ENCODE measurements at regions of chr10 and their contacts with region 1.

Region 1: GRCh38 chr10:91090761-91091529 is 129.5 kb upstream of the PCGF5 start:
- DNase-seq: no peak
- ATAC-seq: peak; percentile 35

Region 2: DNA sequence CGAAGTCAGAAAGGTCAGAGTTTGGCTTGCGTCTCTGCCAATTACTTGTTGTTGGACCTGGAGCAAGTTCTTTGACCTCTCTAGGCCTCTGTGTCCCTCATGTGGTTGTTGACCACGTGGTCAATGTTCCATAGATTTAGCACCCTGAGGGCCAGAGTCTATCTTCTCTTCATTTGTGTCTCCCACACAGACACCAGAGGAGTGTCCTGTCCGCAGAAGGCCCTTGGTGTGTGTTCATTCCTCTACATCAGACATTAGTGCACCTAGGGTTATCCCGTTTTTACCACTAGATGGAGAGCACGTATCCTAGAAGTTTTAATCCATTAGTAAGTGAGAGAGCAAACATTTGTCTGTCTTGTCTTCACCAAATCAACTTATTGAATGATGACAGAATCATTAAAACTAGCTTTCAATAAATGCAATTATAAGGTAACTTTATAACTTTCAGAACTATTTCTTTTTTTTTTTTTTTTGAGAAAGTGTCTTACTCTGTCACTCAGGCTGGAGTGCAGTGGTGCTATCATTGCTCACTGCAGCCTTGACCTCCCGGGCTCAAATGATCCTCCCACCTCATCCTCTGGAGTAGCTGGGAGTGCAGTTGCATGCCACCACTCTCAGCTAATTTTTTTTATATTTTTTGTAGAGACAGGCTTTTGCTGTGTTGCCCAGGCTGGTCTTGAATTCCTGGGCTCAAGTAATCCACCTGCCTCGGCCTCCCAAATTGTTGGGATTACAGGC is 47.6 kb before region 1 on chr10:
- intact Hi-C with region 1: loop called (anchors 5 kb)
- DNase-seq: no peak
- ATAC-seq: peak; percentile 88

Region 3: DNA sequence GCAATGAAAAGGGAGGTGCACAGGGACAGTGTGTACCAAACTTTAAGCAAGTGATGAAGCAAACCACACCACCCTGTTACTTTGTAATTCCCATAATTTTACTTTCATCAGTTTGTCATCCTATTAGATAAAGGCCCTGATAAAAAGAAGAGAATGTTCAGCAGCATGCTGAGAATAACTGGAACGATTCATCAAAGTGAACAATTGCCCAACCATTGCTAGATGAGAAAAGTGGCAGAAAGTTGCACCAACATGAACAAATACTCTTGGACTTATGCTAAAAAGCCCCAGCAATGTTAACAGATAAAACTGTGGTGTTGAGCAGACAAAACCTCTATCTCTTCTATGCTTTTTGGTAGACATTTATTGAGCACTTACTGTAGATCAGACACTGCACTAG is 54.0 kb after region 1 on chr10:
- intact Hi-C with region 1: no loop called
- DNase-seq: no peak
- ATAC-seq: no peak

Region 4: GRCh38 chr10:91220194-91220953 is 129.4 kb after region 1 on chr10 and contains the start of gene PCGF5:
- intact Hi-C with region 1: loop called (anchors 10 kb)
- DNase-seq: peak; percentile 96
- ATAC-seq: peak; percentile 100
- total RNA-seq, gene PCGF5: 63.2 TPM